Transverse colon (tissue), 4 donors: ENCODE measurements at regions of chr7 and their contacts with region 1.

Region 1: GRCh38 chr7:110759069-110759468 is 331.9 kb upstream of the LRRN3 start:
- DNase-seq: no peak
- H3K4me3 ChIP-seq: no peak overlapping the region
- H3K27ac ChIP-seq: no peak overlapping the region
- H3K4me1 ChIP-seq: no peaks in the 10 kb centered on the region
- H3K27me3 ChIP-seq: no peaks in the 10 kb centered on the region
- CTCF ChIP-seq: no peak
- EP300 ChIP-seq: no peak
- POLR2A ChIP-seq: no peak

Region 2: DNA sequence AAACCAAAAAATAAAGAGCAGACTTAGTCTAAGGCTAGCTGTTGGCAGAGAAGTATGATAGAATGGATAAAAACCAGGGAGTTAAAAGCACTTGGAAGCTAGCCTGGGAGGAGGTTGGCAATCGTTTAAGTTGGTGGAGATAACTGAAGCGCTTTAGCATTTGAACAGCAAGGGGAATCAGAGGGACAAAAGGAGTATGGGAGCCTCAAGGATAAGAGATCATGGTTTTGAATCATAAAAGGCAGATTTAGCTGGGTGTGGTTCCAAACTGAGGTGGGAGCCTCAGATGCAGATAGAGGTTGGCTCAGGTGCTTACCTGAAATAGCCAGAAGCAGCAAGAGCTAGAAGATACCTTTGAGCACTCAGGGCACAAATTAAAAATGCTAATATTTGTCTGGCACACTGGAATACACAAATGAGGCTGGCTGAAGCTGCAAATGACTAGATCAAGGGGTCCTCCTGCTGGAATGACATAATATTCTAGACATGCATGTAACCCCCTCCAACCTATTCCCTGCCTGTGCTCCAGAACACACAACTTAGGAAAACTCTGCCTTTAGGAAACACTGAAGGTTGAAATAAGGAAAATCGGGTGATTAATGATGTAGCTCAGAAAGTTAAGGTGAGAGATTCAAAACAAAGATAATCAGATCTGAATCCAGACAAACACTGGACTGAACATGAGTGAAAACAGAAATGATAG is 40.4 kb before region 1 on chr7:
- in situ Hi-C with region 1: no loop called
- intact Hi-C with region 1: no loop called
- DNase-seq: no peak
- H3K4me3 ChIP-seq: no peak overlapping the region
- H3K27ac ChIP-seq: no peak overlapping the region
- H3K4me1 ChIP-seq: no peaks in the 10 kb centered on the region
- H3K27me3 ChIP-seq: no peaks in the 10 kb centered on the region
- CTCF ChIP-seq: no peak
- EP300 ChIP-seq: no peak
- POLR2A ChIP-seq: no peak

Region 3: DNA sequence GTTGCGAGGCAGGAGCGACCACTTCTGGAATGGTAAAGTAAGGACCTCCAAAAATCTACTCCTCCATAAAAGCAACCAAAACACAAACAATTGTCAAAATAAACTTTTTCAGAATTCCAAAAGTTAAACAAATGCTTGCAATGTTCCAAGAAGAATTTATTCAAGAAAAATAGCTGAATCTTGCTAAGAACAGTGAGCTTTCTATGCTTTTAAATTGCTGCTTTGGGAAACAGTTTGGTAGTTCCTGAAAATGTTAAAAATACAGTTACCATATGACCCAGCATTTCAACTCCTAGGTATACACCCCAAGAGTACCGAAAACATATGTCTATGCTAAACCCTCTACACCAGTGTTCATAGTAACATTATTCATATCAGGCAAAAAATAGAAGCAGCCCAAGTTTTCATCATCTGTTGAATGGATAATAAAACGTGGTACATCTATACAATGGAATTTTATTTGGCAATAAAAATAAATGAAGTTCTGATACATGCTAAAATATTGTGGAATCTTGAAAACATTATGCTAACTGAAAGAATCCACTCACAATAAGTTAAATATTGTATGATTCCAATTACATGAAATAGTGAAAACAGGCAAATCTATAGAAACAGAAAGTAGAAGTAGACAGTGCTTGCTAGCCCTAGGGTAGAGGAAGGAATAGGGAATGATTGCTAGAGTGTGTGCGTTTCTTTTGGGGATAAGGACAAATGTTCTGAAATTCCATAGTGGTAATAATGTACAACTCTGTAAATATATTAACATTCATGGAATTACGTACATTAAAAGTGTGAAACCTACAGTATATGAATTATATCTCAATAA is 388.9 kb after region 1 on chr7:
- in situ Hi-C with region 1: no loop called
- intact Hi-C with region 1: loop called (anchors 5 kb)
- DNase-seq: no peak
- H3K4me3 ChIP-seq: no peak overlapping the region
- H3K27ac ChIP-seq: no peak overlapping the region
- H3K4me1 ChIP-seq: no peaks in the 10 kb centered on the region
- H3K27me3 ChIP-seq: no peaks in the 10 kb centered on the region
- CTCF ChIP-seq: no peak
- EP300 ChIP-seq: no peak
- POLR2A ChIP-seq: no peak